ENCODE measurements at regions of chr17 and their contacts with region 1.

Region 1: DNA sequence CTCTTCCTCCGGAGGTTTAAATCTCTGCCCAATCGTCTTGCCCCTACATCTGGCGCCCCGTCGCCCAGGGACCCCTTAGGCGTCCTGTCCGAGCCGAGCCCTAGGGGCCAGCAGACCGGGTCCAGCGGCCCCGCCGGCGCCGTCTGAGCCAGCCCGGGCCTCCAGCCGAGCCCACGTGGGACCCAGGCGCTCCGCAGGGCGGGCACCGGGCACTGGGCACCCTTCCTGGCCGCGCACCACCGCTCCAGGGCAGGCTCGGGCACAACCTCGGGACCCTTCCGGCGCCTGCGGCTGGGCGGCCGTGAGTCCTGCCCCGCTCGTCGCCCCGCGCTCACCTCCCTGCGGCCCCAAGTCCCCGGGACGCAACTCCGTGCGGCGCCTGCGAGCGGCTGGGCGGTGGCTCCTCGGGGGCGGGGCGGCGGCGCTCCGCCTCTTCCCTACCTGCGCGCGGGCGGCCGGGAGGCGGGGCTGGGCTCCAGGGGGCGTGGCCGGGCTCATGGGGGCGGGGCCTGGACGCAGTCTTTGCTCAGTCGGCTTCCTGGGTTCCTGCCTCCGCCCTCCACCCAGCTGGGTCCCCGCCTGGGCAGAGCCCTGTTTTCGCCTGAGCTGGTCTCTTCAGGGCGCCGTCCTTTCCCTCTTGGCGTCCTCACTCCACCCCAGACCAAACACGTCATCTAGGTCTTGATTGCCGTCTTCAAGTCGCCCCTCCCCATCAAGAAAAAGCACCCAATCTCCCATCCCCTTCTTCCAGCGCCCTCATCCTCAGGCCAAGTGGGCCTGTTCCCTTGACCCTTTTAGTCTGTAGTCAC is at the start of gene RHBDF2:
- DNase-seq: peak; percentile 84
- H3K4me3 Mint-ChIP-seq: peak within 1 kb of the TSS; percentile 80
- H3K27ac Mint-ChIP-seq: peak within 1 kb of the TSS; percentile 90
- H3K4me1 Mint-ChIP-seq: peaks cover 30% of the 10 kb centered on the region
- H3K27me3 Mint-ChIP-seq: no peaks in the 10 kb centered on the region
- CTCF ChIP-seq: no peak
- total RNA-seq, gene RHBDF2: 17.5 and 33.4 TPM in 2 replicates

Region 2: DNA sequence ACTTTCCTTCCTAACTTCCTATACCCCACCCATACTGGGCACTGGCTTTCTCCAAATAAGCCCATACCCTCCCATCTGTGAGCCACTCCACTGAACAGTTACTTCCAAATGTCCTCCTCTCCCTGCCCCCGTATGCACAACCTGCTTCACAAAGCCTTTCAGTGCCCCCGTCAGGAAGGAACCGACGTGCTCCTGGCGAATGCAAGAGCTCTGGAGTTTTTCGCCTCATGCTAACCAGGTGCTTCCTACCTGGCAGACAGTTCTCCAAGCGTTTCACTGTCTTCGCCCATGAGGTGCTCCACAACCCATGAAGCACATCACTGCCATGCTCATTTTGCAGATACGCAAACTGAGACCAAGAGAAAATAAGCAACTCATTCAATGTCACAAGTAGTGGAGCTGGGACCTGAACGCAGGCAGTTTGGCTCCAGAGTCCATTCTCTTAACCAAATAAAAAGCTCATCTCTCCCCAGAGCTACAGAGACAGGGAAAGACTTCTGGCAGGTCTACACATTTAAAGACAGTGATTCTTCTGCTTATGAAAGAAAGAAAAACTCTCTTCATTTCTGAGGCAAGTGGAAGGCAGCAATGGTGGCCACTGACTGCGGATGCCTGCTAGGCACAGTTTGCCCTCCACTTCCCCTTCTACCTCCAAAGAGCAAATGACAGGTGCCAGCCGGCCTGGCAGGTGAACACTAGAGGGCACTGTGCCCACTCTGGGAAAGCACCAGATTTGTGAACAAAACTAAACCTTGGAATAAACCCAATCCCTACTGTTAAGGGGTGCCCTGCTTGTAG is 93.0 kb before region 1 on chr17:
- CTCF ChIA-PET with region 1: interaction called, 11 read pairs
- POLR2A ChIA-PET with region 1: no interaction called
- intact Hi-C with region 1: loop called (anchors 1 kb)
- DNase-seq: peak; percentile 75
- H3K4me3 Mint-ChIP-seq: no peak overlapping the region
- H3K27ac Mint-ChIP-seq: no peak overlapping the region
- H3K4me1 Mint-ChIP-seq: no peaks in the 10 kb centered on the region
- H3K27me3 Mint-ChIP-seq: no peaks in the 10 kb centered on the region
- CTCF ChIP-seq: peak; percentile 75

Region 3: GRCh38 chr17:76452660-76453430 is 48.4 kb before region 1 on chr17 and contains the start of gene UBE2O:
- CTCF ChIA-PET with region 1: interaction called, 31 read pairs
- POLR2A ChIA-PET with region 1: interaction called, 15 read pairs
- intact Hi-C with region 1: no loop called
- DNase-seq: peak; percentile 80
- H3K4me3 Mint-ChIP-seq: peak within 1 kb of the TSS; percentile 76
- H3K27ac Mint-ChIP-seq: peak within 1 kb of the TSS; percentile 11
- H3K4me1 Mint-ChIP-seq: peaks cover 13% of the 10 kb centered on the region
- H3K27me3 Mint-ChIP-seq: no peaks in the 10 kb centered on the region
- CTCF ChIP-seq: no peak
- total RNA-seq, gene UBE2O: 16.2 and 19.5 TPM in 2 replicates

Region 4: GRCh38 chr17:76458580-76459490 is 42.4 kb before region 1 on chr17:
- CTCF ChIA-PET with region 1: interaction called, 134 read pairs
- POLR2A ChIA-PET with region 1: interaction called, 15 read pairs
- intact Hi-C with region 1: loop called (anchors 1 kb)
- DNase-seq: peak; percentile 72
- H3K4me3 Mint-ChIP-seq: no peak overlapping the region
- H3K27ac Mint-ChIP-seq: no peak overlapping the region
- H3K4me1 Mint-ChIP-seq: no peaks in the 10 kb centered on the region
- H3K27me3 Mint-ChIP-seq: no peaks in the 10 kb centered on the region
- CTCF ChIP-seq: peak; percentile 60

Region 5: DNA sequence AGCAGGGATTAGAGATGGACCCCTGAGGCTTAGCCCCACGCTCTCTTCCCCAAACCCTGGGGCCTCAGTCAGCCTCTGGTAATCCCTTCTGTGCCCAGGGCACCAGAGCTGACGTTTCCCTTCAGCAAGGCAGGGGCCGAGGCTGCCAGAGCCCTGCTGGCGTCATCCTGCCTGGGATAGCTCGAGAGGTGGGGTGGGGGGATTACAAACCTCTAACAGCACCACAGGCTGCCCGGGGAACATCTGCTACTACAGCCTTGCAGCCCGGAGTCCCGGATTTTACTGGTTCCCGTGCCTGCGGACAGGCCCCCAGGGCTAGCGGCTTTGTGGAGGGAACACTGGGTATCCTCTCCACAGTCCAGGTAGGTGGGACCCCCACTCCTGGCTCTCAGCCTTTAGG is 33.9 kb before region 1 on chr17 and contains the start of gene AANAT:
- CTCF ChIA-PET with region 1: interaction called, 134 read pairs
- POLR2A ChIA-PET with region 1: interaction called, 14 read pairs
- intact Hi-C with region 1: loop called (anchors 1 kb)
- DNase-seq: no peak
- H3K4me3 Mint-ChIP-seq: no peak within 1 kb of the TSS
- H3K27ac Mint-ChIP-seq: no peak within 1 kb of the TSS
- H3K4me1 Mint-ChIP-seq: no peaks in the 10 kb centered on the region
- H3K27me3 Mint-ChIP-seq: no peaks in the 10 kb centered on the region
- CTCF ChIP-seq: no peak
- total RNA-seq, gene AANAT: not detected in 2 replicates

Region 6: DNA sequence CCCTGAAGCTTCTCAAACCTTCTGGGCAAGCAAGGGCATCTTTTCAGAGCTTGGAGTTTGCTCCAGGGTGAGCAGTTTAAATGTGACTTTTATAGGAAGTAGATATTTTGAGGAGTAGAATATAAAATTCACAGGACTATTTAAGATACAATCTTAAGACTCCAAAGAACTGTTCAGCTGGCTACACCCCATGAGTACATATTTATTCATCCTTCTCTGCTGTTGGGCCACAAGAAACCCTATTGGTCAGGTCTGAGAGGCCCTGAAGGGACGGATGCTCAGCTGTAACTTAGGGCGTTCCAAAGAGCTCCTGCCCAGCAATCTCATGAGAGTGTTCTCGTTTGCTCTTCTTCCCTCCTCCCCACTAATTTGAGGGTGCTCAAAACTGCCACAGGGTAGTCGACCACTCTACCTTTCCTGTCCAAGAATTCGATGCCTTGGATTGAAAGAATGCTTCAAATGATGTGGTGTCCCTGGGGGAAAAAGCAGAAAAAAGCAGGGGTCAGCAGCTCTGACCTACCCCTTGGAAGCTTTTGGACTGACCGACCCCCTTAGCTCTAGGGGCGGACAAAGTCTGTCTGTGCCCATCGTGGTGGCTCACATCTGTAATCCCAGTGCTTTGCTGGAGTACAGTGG is 77.2 kb after region 1 on chr17:
- CTCF ChIA-PET with region 1: no interaction called
- POLR2A ChIA-PET with region 1: no interaction called
- intact Hi-C with region 1: no loop called
- DNase-seq: no peak
- H3K4me3 Mint-ChIP-seq: no peak overlapping the region
- H3K27ac Mint-ChIP-seq: no peak overlapping the region
- H3K4me1 Mint-ChIP-seq: peaks cover 14% of the 10 kb centered on the region
- H3K27me3 Mint-ChIP-seq: no peaks in the 10 kb centered on the region
- CTCF ChIP-seq: no peak

Region 7: DNA sequence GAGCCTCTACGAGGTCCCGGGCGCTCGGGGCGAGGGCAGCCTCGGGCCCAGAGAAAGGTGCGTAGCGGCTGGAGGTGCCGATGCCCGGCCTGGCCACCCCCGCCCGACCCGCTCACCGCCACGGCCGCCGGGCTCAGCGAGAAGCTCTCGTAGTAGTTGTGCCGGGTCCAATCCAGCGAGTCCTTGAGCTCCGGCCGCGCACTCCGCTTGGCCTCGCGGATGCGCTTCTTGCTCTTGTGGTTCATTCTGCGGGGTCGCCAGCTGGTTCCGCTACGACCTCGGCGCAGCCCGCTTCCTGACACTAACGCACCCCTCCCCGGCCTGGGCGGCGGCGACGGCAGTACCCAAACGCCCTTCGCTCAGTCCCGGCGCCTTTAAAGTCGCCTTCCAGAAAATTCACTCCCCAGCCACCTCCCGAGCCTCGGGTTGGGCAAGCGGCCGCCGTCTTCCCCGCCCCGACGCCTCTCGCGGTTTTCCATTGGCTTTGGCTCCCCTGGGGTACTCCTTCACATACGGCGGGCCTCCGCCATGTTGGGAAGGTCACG is 225.1 kb after region 1 on chr17 and contains the start of gene JMJD6:
- CTCF ChIA-PET with region 1: no interaction called
- POLR2A ChIA-PET with region 1: interaction called, 13 read pairs
- intact Hi-C with region 1: no loop called
- DNase-seq: peak; percentile 97
- H3K4me3 Mint-ChIP-seq: peak within 1 kb of the TSS; percentile 90
- H3K27ac Mint-ChIP-seq: peak within 1 kb of the TSS; percentile 94
- H3K4me1 Mint-ChIP-seq: peaks cover 6% of the 10 kb centered on the region
- H3K27me3 Mint-ChIP-seq: no peaks in the 10 kb centered on the region
- CTCF ChIP-seq: no peak
- total RNA-seq, gene JMJD6: 29.4 and 45.8 TPM in 2 replicates

Region 8: DNA sequence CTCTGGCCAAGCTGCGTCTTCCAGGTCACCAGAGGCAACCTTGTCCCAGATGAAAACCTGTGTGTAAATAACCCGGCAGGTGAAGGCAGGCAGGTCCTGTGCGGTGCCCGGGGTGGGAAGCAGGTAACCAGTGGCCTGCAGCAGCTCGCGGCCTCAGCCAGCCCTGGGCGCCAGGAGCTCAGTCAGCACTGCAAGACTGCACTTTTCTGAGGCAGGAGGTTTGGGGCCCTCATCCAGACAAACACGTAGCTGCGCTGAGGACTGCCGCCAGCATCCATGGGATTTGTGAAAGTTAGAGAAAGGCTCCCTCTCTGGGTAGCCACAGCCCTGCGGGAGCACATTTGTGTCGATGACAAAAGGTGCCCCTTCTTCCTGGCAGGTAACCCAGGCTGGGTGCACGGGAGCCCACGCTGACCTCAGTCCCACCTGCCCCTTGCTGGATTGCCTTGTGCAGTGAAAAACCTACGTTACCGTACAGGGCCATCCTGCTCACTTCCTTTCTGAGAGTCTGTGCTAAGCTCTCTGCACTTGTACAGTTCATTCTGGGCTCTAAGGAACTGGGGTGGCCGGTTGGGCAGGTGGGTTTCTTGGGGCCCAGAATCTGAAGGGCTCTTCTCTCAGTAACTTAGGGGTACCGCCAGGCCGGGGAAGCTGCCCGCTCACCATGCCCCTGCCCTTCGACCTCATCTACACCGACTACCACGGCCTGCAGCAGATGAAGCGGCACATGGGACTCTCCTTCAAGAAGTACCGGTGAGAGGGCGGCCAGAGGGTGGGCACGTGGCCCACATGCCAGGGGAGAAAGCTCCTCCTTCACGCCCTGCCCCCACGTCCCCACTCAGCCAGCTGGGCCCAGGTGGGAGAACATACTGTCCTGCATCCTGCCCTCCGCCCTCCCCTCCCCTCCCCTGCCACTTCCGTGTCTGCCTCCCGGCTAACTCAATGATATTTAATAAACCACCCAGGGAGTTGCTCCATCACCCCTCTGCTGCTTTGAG is 423.4 kb after region 1 on chr17:
- CTCF ChIA-PET with region 1: no interaction called
- POLR2A ChIA-PET with region 1: no interaction called
- intact Hi-C with region 1: no loop called
- DNase-seq: no peak
- H3K4me3 Mint-ChIP-seq: no peak overlapping the region
- H3K27ac Mint-ChIP-seq: no peak overlapping the region
- H3K4me1 Mint-ChIP-seq: no peaks in the 10 kb centered on the region
- H3K27me3 Mint-ChIP-seq: peaks cover 13% of the 10 kb centered on the region
- CTCF ChIP-seq: no peak

Measured in MCF 10A (cell line).